ENCODE measurements at regions of chr22 and their contacts with region 1.

Region 1: DNA sequence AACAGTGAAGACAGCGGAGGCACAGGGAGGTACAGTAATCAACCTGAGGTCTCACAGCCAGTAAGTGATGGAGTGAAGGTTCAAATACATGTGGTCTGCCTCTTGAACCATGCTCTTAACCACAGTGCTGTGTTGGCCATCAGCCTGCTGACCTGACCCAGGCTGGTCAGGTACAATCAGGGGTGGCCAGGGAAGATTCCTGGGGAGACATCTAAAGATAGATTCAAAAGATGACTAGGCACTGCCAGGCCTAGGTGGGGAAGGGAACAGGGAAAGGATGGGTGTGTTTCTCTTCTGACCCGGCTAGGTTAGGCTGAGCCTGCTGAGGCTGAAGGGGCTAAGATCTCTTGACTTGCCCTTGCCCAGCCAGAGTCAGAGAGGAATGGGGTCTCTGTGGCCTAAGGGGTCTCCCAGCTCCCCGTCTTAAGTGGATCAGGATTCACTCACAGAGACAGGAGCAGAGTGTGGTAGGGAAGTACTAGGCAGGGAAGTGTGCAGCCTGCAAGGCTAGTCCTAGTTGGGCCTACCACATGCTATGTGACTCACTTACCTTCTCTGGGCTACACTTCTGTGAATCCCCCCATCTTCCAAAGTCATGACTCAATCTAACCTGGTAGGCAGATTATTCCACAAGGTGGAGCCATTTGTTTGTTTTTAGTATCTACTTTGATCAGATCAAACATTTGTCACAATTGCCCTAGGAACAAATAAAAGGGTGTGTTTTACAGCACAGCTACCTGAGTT is 10.4 kb upstream of the SREBF2 start:
- DNase-seq: peak; percentile 40
- H3K4me3 Mint-ChIP-seq: no peak overlapping the region
- H3K27ac Mint-ChIP-seq: no peak overlapping the region
- H3K4me1 Mint-ChIP-seq: peaks cover 11% of the 10 kb centered on the region
- H3K27me3 Mint-ChIP-seq: no peaks in the 10 kb centered on the region
- CTCF ChIP-seq: peak; percentile 35

Region 2: DNA sequence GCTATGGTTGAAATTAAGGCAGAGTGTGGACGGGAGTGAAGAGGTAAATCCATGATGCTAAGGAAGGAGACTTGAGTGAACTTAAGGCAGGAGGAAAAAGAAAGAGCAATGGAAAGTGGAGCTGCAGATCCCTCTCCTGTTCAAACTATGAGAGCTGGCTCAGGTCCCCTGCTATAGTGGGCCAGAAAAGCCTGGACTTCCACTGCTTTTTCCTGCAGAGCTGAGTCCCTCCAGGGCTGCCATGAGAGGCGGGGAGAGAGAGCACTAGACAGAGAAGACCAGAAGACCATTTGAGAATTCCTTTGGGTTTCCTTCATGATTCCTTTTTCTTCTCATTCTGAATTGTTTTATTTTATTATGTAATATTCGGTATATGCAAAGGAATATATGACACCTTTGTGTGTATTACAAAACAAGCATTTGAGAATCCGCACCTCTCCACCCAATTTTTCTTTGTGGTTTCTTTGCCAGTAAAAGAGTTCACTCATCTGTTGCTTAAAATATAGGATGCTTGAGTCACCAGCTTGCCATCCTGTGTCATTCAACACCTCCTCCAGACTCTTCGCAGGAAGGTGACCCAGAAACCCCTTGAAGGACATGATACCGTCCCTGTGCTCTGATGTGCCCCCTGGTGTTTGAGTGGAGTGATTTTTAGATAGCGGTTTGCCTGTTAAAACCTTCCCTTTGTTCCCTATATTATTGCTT is 34.8 kb after region 1 on chr22:
- CTCF ChIA-PET with region 1: interaction called, 7 read pairs
- intact Hi-C with region 1: loop called (anchors 1 kb)
- DNase-seq: peak; percentile 72
- H3K4me3 Mint-ChIP-seq: no peak overlapping the region
- H3K27ac Mint-ChIP-seq: peak overlapping the region; percentile 63
- H3K4me1 Mint-ChIP-seq: peaks cover 35% of the 10 kb centered on the region
- H3K27me3 Mint-ChIP-seq: no peaks in the 10 kb centered on the region
- CTCF ChIP-seq: peak; percentile 68

Measured in Calu3 (cell line).